HEK293 (cell line): ENCODE measurements at regions of chr4 and their contacts with region 1.

Region 1: DNA sequence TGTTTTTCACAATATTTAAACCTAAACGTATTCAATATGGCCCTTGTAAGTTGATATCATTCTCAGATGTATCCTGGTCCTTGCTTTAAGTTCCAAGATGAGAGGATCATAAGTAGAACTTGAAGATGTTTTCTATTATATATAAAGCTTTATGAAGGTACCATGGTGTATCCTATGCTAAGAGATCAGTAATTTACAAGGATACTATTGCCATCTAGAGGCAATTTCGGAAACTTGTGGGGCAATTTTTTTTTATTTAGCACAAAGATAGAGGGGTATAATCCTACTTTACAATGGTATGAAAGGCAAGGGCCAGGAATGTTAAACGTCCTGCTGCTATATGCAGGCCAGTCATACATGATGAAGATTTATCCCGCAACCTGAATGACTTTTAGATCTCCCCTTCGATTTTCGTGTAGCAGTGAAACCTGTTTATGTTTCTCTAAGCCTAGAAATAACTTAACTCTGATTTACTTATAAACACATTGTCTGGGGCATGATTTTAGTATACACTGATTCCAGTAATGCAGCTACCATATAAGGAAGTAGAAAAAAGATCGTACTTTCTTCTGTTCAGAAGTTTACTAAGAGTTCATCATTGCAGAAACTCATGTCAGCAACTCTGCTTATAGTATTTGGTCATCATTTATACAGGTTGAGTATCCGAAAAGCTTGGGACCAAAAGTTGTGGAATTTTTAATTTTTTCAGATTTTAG is 2.6 kb downstream of the SLC25A31 start:
- H3K4me3 ChIP-seq: no peak overlapping the region
- H3K27ac ChIP-seq: no peak overlapping the region
- H3K4me1 ChIP-seq: no peaks in the 10 kb centered on the region
- CTCF ChIP-seq: no peak

Region 2: DNA sequence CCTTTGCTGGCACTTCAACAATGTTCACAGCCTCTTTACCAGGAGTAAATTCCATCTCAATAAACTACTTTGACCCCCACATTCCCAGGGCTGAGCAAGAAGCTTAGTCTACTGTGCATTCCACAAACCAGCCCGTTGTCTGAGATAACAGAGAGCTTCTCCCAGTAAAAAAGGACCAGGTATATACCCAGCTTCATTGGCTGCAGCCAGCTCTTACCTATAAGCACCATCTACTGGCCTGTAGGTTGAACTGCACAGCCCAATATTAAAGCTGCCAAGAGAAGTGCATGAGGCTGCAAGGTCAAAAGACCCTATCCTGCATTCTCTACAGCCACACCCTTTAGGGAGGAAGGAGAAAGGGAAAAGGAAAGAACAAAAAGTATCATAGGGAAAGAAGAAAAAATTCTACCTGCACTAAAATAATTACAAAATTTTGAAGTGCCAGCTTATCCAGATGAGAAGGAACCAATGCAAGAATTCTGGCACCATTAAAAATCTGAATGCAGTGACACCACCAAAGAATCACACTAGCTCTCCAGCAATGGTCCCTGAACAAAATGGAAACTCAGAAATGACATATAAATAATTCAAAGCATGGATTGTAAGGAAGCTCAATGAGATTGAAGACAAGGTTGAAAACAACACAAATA is 145.7 kb before region 1 on chr4:
- CTCF ChIA-PET with region 1: interaction called, 13 read pairs
- POLR2A ChIA-PET with region 1: no interaction called
- H3K4me3 ChIP-seq: no peak overlapping the region
- H3K27ac ChIP-seq: no peak overlapping the region
- H3K4me1 ChIP-seq: no peaks in the 10 kb centered on the region
- CTCF ChIP-seq: no peak

Region 3: GRCh38 chr4:127604949-127605709 is 127.6 kb before region 1 on chr4:
- CTCF ChIA-PET with region 1: interaction called, 83 read pairs
- POLR2A ChIA-PET with region 1: no interaction called
- H3K4me3 ChIP-seq: no peak overlapping the region
- H3K27ac ChIP-seq: no peak overlapping the region
- H3K4me1 ChIP-seq: no peaks in the 10 kb centered on the region
- CTCF ChIP-seq: no peak

Region 4: GRCh38 chr4:127622921-127623656 is 109.7 kb before region 1 on chr4:
- CTCF ChIA-PET with region 1: interaction called, 14 read pairs
- POLR2A ChIA-PET with region 1: interaction called, 4 read pairs
- H3K4me3 ChIP-seq: peak overlapping the region; percentile 69
- H3K27ac ChIP-seq: peak overlapping the region; percentile 70
- H3K4me1 ChIP-seq: no peaks in the 10 kb centered on the region
- CTCF ChIP-seq: peak; percentile 85

Region 5: DNA sequence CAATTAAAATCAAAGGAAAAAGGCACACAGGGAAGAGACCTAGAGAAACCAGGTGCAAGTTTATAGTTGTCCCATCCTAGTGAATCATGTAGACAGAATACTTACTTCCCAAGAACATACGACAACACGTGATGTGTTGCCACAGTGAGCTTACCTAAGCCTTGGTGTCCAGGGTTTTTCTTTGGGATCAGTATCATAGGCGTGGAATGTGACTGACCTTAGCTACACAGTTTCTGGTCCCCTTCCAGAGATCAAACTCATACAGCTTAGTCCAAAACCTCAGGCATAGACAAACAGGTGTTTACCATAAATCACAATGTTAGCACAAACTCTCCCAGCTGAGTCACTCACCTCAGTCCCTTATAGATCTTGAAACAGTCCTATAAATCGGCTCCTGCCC is 15.1 kb after region 1 on chr4:
- CTCF ChIA-PET with region 1: interaction called, 16 read pairs
- POLR2A ChIA-PET with region 1: no interaction called
- H3K4me3 ChIP-seq: no peak overlapping the region
- H3K27ac ChIP-seq: no peak overlapping the region
- H3K4me1 ChIP-seq: no peaks in the 10 kb centered on the region
- CTCF ChIP-seq: no peak